T-cell (primary cell): ENCODE measurements at regions of chr4 and their contacts with region 1.

Region 1: GRCh38 chr4:56424697-56425514 is 10.5 kb downstream of the PPAT start:
- DNase-seq: peak in 24 of 35 experiments; percentile 4 to 73 (median 34)
- ATAC-seq: peak in 2 of 4 experiments; percentile 29 to 43
- H3K4me3 ChIP-seq: no peak overlapping the region
- H3K4me3 Mint-ChIP-seq: no peak overlapping the region
- H3K27ac ChIP-seq: no peak overlapping the region
- H3K27ac Mint-ChIP-seq: no peak overlapping the region
- H3K4me1 ChIP-seq: no peaks in the 10 kb centered on the region
- H3K4me1 Mint-ChIP-seq: peaks cover 3 to 14% (median 3%) of the 10 kb centered on the region in 3 donors
- H3K27me3 ChIP-seq: no peaks in the 10 kb centered on the region
- H3K27me3 Mint-ChIP-seq: no peaks in the 10 kb centered on the region

Region 2: GRCh38 chr4:56048702-56049431 is 376.0 kb before region 1 on chr4:
- CTCF ChIA-PET with region 1: no interaction called
- POLR2A ChIA-PET with region 1: interaction called in 1 of 2 experiments, 14 read pairs
- DNase-seq: peak in 19 of 35 experiments; percentile 1 to 31 (median 8)
- ATAC-seq: peak; percentile 78 to 89 (median 82)
- H3K4me3 ChIP-seq: peak overlapping the region in 1 of 2 donors; percentile 60
- H3K4me3 Mint-ChIP-seq: peak overlapping the region; percentile 52 to 68 (median 64)
- H3K27ac ChIP-seq: no peak overlapping the region
- H3K27ac Mint-ChIP-seq: no peak overlapping the region
- H3K4me1 ChIP-seq: peaks cover 2 to 11% of the 10 kb centered on the region in 2 experiments
- H3K4me1 Mint-ChIP-seq: peaks cover 9 to 18% (median 10%) of the 10 kb centered on the region in 3 donors
- H3K27me3 ChIP-seq: peaks cover 0 to 21% of the 10 kb centered on the region in 2 experiments
- H3K27me3 Mint-ChIP-seq: peaks cover 40 to 48% of the 10 kb centered on the region in 2 donors

Region 3: GRCh38 chr4:56435306-56435926 is 10.5 kb after region 1 on chr4 and contains the start of gene PPAT:
- CTCF ChIA-PET with region 1: interaction called, 9 to 74 read pairs
- POLR2A ChIA-PET with region 1: interaction called, 4 to 9 read pairs
- DNase-seq: peak; percentile 95 to 100 (median 98)
- ATAC-seq: peak; percentile 80 to 87 (median 83)
- H3K4me3 ChIP-seq: peak within 1 kb of the TSS; percentile 88 to 94
- H3K4me3 Mint-ChIP-seq: peak within 1 kb of the TSS; percentile 89 to 93 (median 90)
- H3K27ac ChIP-seq: peak within 1 kb of the TSS; percentile 86
- H3K27ac Mint-ChIP-seq: peak within 1 kb of the TSS; percentile 97 to 98
- H3K4me1 ChIP-seq: peaks cover 16 to 24% of the 10 kb centered on the region in 2 experiments
- H3K4me1 Mint-ChIP-seq: peaks cover 41 to 55% (median 46%) of the 10 kb centered on the region in 3 donors
- H3K27me3 ChIP-seq: no peaks in the 10 kb centered on the region
- H3K27me3 Mint-ChIP-seq: no peaks in the 10 kb centered on the region
- total RNA-seq, gene PPAT: 10.5 to 15.1 (median 12.5) TPM

Region 4: GRCh38 chr4:56460085-56460484 is 35.2 kb after region 1 on chr4:
- CTCF ChIA-PET with region 1: interaction called in 1 of 2 experiments, 10 read pairs
- POLR2A ChIA-PET with region 1: interaction called in 1 of 2 experiments, 3 read pairs
- DNase-seq: no peak
- ATAC-seq: no peak
- H3K4me3 ChIP-seq: no peak overlapping the region
- H3K4me3 Mint-ChIP-seq: no peak overlapping the region
- H3K27ac ChIP-seq: no peak overlapping the region
- H3K27ac Mint-ChIP-seq: no peak overlapping the region
- H3K4me1 ChIP-seq: peaks cover 0 to 3% of the 10 kb centered on the region in 2 experiments
- H3K4me1 Mint-ChIP-seq: peaks cover 20 to 28% (median 20%) of the 10 kb centered on the region in 3 donors
- H3K27me3 ChIP-seq: no peaks in the 10 kb centered on the region
- H3K27me3 Mint-ChIP-seq: no peaks in the 10 kb centered on the region

Region 5: DNA sequence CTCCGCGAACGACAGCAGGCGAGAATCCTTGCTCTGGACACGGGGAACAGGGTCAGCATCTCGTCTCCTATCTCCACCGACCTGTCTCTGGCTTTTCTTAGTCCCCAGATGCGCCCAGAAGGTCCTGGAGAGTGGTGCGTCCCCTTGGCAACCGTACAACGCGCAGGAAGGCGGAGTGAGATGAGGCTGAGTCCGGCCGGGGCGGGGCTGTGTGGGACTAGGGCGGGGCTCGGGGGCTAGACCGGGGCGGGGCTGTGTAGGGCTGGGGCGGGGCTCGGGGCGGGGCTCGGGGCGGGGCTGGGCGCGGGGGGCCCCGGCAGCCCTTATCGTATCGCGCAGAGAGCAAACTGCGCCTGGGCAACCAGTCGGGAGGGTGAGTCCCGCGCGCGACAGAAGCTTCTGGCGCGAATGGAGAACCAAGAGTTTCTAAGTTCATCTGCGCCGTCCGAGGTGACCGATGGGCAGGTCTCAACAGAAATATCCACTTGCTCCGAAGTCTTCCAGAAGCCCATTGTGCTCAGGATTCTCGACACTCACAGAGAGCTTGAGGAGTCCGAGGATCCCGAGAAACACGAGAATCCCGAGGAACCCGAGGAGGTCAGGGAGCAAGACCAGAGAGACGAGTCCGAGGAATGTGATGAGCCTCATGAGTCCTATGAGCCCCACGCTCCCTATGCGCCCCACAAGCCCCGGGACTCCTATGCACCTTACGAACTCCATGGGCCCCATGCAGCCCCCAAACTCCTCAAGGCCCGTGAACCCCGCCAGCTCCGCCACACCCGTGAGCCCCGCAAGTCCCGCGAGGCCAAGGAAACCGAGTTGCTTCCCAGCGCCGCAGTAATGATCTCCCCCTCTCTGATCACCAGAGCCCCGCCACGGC is 105.6 kb after region 1 on chr4:
- CTCF ChIA-PET with region 1: no interaction called
- POLR2A ChIA-PET with region 1: interaction called in 1 of 2 experiments, 10 read pairs
- DNase-seq: peak; percentile 29 to 81 (median 63)
- ATAC-seq: peak; percentile 95 to 98 (median 97)
- H3K4me3 ChIP-seq: peak overlapping the region; percentile 71 to 81
- H3K4me3 Mint-ChIP-seq: peak overlapping the region in 1 of 3 donors; percentile 73
- H3K27ac ChIP-seq: no peak overlapping the region
- H3K27ac Mint-ChIP-seq: no peak overlapping the region
- H3K4me1 ChIP-seq: peaks cover 8 to 11% of the 10 kb centered on the region in 2 experiments
- H3K4me1 Mint-ChIP-seq: peaks cover 0 to 3% (median 0%) of the 10 kb centered on the region in 3 donors
- H3K27me3 ChIP-seq: peaks cover 7 to 8% of the 10 kb centered on the region in 2 experiments
- H3K27me3 Mint-ChIP-seq: no peaks in the 10 kb centered on the region

Region 6: DNA sequence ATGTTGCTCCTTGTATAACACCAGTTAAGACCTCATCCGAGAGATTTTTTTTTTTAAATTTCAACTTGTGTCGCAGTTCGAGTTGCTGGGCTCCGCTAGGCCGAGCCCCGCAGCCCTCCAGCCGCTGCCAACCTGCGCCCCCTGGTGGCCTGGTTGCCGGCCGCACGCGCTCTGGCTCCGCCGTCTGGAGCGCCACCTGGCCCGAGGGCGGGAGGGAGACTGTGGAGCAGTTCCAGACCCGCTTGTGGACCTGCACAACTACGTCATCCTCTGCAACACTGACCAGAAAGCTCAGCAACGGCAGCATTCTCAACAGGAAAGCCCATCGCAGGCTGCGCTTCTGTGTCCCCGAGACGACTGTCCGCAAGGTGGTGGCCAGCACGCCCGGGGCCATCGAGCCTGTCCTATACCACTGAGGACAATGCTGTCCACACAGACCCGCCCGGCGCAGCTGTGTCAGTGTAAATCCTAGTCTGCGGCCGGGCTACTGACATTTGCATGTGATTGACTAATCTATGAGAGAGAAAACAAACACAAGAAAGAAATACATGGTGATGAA is 119.7 kb after region 1 on chr4:
- CTCF ChIA-PET with region 1: interaction called, 7 to 12 read pairs
- POLR2A ChIA-PET with region 1: interaction called in 1 of 2 experiments, 4 read pairs
- DNase-seq: peak; percentile 54 to 91 (median 79)
- ATAC-seq: peak; percentile 100
- H3K4me3 ChIP-seq: peak overlapping the region; percentile 15 to 26
- H3K4me3 Mint-ChIP-seq: peak overlapping the region; percentile 50 to 61 (median 57)
- H3K27ac ChIP-seq: no peak overlapping the region
- H3K27ac Mint-ChIP-seq: no peak overlapping the region
- H3K4me1 ChIP-seq: peaks cover 0 to 6% of the 10 kb centered on the region in 2 experiments
- H3K4me1 Mint-ChIP-seq: peaks cover 13 to 19% (median 16%) of the 10 kb centered on the region in 3 donors
- H3K27me3 ChIP-seq: peaks cover 0 to 7% of the 10 kb centered on the region in 2 experiments
- H3K27me3 Mint-ChIP-seq: peaks cover 4 to 12% of the 10 kb centered on the region in 2 donors

Region 7: DNA sequence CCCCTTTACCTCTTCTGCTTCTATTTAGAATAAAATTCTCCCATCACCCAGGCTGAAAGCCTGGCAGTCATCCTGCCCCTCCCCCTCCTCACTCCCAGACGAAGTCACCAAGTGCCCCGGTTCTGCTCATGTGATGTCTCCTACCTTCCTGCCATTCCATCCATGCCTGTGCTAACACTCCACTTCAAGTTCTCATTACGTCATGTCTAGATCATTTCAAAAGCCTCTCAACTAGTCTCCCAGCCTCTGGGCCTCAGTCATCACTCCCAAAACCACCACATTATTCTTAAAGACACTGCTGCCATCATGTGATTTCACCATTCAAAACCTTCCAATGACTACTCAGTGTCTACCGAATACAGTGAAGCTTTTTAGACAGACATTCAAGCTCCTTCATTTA is 273.4 kb after region 1 on chr4:
- CTCF ChIA-PET with region 1: no interaction called
- POLR2A ChIA-PET with region 1: no interaction called
- DNase-seq: no peak
- ATAC-seq: no peak
- H3K4me3 ChIP-seq: no peak overlapping the region
- H3K4me3 Mint-ChIP-seq: no peak overlapping the region
- H3K27ac ChIP-seq: no peak overlapping the region
- H3K27ac Mint-ChIP-seq: no peak overlapping the region
- H3K4me1 ChIP-seq: no peaks in the 10 kb centered on the region
- H3K4me1 Mint-ChIP-seq: peaks cover 9 to 12% (median 11%) of the 10 kb centered on the region in 3 donors
- H3K27me3 ChIP-seq: no peaks in the 10 kb centered on the region
- H3K27me3 Mint-ChIP-seq: no peaks in the 10 kb centered on the region

Region 8: GRCh38 chr4:56843421-56843899 is 418.6 kb after region 1 on chr4:
- CTCF ChIA-PET with region 1: interaction called, 3 to 37 read pairs
- POLR2A ChIA-PET with region 1: no interaction called
- DNase-seq: no peak
- ATAC-seq: no peak
- H3K4me3 ChIP-seq: no peak overlapping the region
- H3K4me3 Mint-ChIP-seq: no peak overlapping the region
- H3K27ac ChIP-seq: no peak overlapping the region
- H3K27ac Mint-ChIP-seq: no peak overlapping the region
- H3K4me1 ChIP-seq: no peaks in the 10 kb centered on the region
- H3K4me1 Mint-ChIP-seq: no peaks in the 10 kb centered on the region
- H3K27me3 ChIP-seq: no peaks in the 10 kb centered on the region
- H3K27me3 Mint-ChIP-seq: no peaks in the 10 kb centered on the region